IMR-90 (cell line): ENCODE measurements at regions of chr6 and their contacts with region 1.

Region 1: DNA sequence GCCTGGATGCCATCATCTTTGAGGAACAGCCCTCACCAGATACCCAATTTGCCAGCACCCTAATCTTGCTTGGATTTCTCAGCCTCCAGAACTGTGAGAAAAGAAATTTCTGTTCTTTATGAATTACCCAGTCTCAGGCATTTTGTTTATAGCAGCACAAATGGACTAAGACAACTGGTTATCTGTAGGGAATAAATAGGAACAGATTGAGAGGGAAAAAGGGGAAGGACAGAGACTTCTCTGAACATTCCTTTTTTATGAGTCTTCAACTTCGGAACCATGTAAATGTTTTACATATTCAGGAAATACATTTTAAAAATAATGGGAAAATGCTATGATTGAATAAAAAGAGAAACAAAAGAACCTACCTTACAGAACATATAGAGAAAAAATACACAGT is 20.9 kb downstream of the KCTD20 start:
- DNase-seq: peak; percentile 55
- ATAC-seq: peak; percentile 87
- H3K4me3 ChIP-seq: no peak overlapping the region
- H3K27ac ChIP-seq: no peak overlapping the region
- H3K4me1 ChIP-seq: peaks cover 8% of the 10 kb centered on the region
- H3K27me3 ChIP-seq: no peaks in the 10 kb centered on the region
- CTCF ChIP-seq: no peak
- POLR2A ChIP-seq: no peak
- RAD21 ChIP-seq: no peak

Region 2: DNA sequence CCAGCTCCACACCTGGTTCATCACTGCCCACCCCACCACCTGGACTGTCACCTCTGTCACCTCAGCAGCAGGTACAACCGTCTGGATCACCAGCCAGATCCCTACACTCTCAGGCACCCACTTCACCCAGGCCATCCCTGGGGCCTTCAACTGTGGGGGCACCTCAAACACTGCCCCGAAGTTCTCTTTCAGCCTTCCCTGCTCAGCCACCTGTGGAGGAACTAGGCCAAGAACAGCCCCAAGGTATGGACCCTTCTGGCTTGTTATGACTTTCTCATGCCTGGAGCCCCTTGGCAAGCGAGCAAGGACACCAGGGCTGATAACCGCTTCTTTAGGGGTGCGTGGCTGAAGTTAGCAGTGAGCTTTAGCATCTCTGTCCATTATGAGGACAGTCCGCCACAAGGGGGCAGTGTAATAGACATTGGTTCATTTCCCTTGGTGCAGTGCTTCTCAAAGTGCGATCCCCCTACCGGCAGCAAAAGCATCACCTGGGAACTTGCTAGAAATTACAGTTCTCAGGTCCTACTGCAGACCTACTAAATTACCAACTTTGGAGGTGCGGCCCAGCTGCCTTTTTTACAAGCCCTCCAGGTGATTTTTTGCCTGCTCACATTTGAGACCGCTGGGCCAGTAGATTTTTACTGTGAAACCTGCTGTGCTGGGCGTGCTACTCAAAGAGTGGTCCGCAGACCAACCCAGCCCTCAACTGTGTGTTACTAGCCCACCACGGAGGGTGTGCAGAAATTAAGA is 161.3 kb before region 1 on chr6:
- CTCF ChIA-PET with region 1: no interaction called
- POLR2A ChIA-PET with region 1: no interaction called
- dilution Hi-C with region 1: no loop called
- in situ Hi-C with region 1: no loop called
- intact Hi-C with region 1: no loop called
- DNase-seq: peak; percentile 86
- ATAC-seq: peak; percentile 85
- H3K4me3 ChIP-seq: no peak overlapping the region
- H3K27ac ChIP-seq: no peak overlapping the region
- H3K4me1 ChIP-seq: peaks cover 4% of the 10 kb centered on the region
- H3K27me3 ChIP-seq: peaks cover 15% of the 10 kb centered on the region
- CTCF ChIP-seq: peak; percentile 98
- POLR2A ChIP-seq: no peak
- RAD21 ChIP-seq: peak; percentile 74

Region 3: DNA sequence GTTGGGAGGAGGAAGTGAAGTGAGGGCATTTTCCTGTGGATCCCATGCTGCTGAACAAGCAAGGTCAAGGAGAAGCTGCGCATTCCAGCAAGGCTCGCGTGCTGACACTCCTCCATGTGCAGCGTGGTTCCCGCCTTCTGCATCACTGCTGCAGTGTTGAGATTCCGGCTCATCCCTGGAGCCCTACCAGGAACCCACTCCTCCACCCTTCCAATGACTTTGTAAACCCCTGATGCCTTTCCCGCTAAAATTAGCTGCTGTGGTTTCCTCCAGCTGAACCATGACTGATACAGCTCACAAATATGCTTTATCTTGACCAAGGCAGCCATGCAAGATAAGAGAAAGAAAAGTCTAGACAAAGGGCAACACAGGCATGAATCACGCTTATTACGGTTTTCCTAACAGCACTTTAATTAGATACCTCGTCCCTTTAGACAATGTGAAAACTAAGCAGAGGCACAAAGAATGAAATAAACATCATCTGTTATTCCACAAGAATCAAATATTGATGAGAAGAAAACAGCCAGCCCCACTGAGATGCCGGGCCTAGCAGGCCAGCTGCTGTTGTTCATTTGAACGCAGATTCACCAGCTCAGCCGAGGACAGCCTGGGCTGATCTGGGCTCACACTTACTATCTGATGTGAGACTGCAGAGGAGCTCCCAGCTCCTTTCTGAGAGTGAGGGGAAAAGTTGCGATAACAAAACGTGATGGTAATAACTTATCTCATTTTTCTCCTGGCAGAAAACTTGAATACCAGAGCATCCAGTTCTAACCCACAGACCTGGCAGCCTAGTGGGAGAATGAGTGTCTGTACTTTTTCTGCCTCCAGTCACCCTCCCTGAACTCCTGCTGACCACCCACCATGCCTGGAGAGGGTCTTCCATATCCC is 112.8 kb before region 1 on chr6:
- CTCF ChIA-PET with region 1: no interaction called
- POLR2A ChIA-PET with region 1: no interaction called
- dilution Hi-C with region 1: no loop called
- in situ Hi-C with region 1: no loop called
- intact Hi-C with region 1: no loop called
- DNase-seq: peak; percentile 92
- ATAC-seq: peak; percentile 92
- H3K4me3 ChIP-seq: no peak overlapping the region
- H3K27ac ChIP-seq: no peak overlapping the region
- H3K4me1 ChIP-seq: peaks cover 11% of the 10 kb centered on the region
- H3K27me3 ChIP-seq: peaks cover 2% of the 10 kb centered on the region; the same call in 1 of the 2 replicates
- CTCF ChIP-seq: no peak
- POLR2A ChIP-seq: no peak
- RAD21 ChIP-seq: no peak

Region 4: GRCh38 chr6:36383606-36384005 is 80.1 kb before region 1 on chr6:
- CTCF ChIA-PET with region 1: no interaction called
- POLR2A ChIA-PET with region 1: interaction called, 14 read pairs
- dilution Hi-C with region 1: no loop called
- in situ Hi-C with region 1: no loop called
- intact Hi-C with region 1: no loop called
- DNase-seq: no peak
- ATAC-seq: no peak
- H3K4me3 ChIP-seq: no peak overlapping the region
- H3K27ac ChIP-seq: no peak overlapping the region
- H3K4me1 ChIP-seq: peaks cover 6% of the 10 kb centered on the region; the same call in 1 of the 2 replicates
- H3K27me3 ChIP-seq: peaks cover 30% of the 10 kb centered on the region
- CTCF ChIP-seq: no peak
- POLR2A ChIP-seq: no peak
- RAD21 ChIP-seq: no peak

Region 5: DNA sequence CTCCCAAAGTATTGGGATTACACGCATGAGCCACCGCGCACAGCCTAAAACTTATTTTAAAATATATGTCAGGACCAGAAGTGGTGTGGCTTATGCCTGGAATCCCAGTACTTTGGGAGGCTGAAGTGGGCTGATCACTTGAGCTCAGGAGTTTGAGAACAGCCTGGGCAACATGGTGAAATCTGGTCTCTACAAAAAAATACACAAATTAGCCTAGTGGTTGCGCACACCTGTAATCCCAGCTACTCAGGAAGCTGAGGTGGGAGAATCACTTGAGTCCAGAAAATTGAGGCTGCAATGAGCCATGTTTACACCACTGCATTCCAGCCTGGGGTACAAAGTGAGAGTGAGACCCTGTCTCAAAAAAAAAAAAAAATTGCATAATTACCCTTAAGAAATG is 34.8 kb before region 1 on chr6:
- CTCF ChIA-PET with region 1: no interaction called
- POLR2A ChIA-PET with region 1: no interaction called
- dilution Hi-C with region 1: no loop called
- in situ Hi-C with region 1: no loop called
- intact Hi-C with region 1: no loop called
- DNase-seq: no peak
- ATAC-seq: no peak
- H3K4me3 ChIP-seq: no peak overlapping the region
- H3K27ac ChIP-seq: no peak overlapping the region
- H3K4me1 ChIP-seq: peaks cover 12% of the 10 kb centered on the region
- H3K27me3 ChIP-seq: no peaks in the 10 kb centered on the region
- CTCF ChIP-seq: peak; percentile 25; the same call in 1 of the 2 replicates
- POLR2A ChIP-seq: no peak
- RAD21 ChIP-seq: no peak